Ovary (tissue), 10 donors: ENCODE measurements at regions of chr21 and their contacts with region 1.

Region 1: GRCh38 chr21:45287438-45288391 is at the start of gene POFUT2:
- DNase-seq: peak; percentile 97 to 99 (median 99)
- H3K4me3 ChIP-seq: peak within 1 kb of the TSS; percentile 79
- H3K27ac ChIP-seq: peak within 1 kb of the TSS; percentile 30 to 53
- H3K4me1 ChIP-seq: peaks cover 10% of the 10 kb centered on the region
- H3K27me3 ChIP-seq: no peaks in the 10 kb centered on the region
- CTCF ChIP-seq: no peak
- EP300 ChIP-seq: no peak
- POLR2A ChIP-seq: peak; percentile 82
- total RNA-seq, gene POFUT2: 26.2 to 48.2 (median 40.1) TPM

Region 2: DNA sequence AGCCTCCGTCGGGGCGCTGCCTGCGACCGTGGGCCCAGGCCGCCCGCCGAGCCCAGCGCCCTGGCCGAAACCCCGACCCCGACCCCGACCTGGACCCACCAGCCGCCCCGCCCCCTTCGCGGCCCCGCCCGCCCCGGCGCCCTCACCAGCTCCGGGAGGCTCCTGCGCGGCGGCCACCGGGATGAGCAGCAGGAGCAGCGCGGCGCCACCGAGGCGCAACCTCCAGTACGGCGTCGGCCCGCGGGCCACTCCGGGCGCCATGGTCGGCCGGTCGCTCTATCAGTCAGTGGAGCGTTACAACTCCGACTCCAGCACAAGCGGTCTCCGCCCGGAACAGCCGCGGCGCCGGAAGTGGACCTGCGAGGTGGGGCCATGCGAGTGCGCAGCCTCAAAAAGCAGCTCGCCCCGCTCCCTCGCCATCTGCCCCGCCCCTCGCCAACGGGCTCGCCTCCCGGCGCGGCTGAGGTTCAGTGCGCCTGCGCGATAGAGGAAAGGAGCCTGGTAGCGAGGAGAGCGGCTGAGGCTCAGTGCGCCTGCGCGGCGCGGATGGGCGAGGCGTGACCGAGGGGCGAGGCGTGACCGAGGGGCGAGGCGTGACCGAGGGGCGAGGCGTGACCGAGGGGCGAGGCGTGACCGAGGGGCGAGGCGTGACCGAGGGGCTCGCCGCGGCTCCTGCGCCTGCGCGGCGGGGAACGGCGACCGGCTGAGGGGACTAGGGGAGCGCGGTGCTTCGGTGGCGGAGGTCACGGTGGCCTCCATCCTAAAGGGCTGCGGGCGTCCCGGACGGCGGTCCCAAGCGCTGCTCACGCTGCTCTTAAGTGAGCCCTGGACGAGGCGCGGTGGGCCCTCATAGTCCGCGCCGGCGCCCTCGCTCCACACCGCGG is 414.1 kb before region 1 on chr21 and contains the start of gene PTTG1IP:
- intact Hi-C with region 1: loop called in 1 of 4 experiments (anchors 10 kb)
- DNase-seq: peak; percentile 98 to 99 (median 99)
- H3K4me3 ChIP-seq: peak within 1 kb of the TSS; percentile 60
- H3K27ac ChIP-seq: peak within 1 kb of the TSS; percentile 71 to 85
- H3K4me1 ChIP-seq: peaks cover 16% of the 10 kb centered on the region
- H3K27me3 ChIP-seq: no peaks in the 10 kb centered on the region
- CTCF ChIP-seq: no peak
- EP300 ChIP-seq: no peak
- POLR2A ChIP-seq: peak; percentile 63
- total RNA-seq, gene PTTG1IP: 133 to 226 (median 143) TPM

Region 3: DNA sequence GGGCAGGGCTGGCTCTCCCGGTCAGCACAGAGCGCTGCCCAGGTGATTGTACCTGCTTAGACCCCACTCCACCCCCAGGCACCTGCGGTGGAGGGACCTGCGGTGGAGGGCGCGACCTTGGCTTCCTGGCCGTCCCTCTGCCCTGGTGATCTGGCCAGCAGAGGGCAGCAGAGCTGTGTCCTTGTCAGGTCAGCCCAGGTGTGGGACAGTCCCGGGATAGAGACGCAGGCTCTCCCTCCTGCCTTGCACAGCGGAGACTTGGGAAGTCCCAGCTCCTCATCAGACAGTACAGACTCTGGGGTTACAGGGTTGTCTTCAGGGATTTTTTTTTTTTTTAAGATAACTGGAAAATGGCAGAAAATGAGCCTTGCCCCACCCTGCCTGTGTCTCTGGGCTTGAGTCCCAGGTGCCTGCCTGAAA is 337.9 kb before region 1 on chr21:
- intact Hi-C with region 1: loop called in 1 of 4 experiments (anchors 10 kb)
- DNase-seq: peak; percentile 85 to 92 (median 89)
- H3K4me3 ChIP-seq: no peak overlapping the region
- H3K27ac ChIP-seq: no peak overlapping the region
- H3K4me1 ChIP-seq: no peaks in the 10 kb centered on the region
- H3K27me3 ChIP-seq: no peaks in the 10 kb centered on the region
- CTCF ChIP-seq: peak; percentile 79 to 91 (median 86)
- EP300 ChIP-seq: no peak
- POLR2A ChIP-seq: no peak

Region 4: GRCh38 chr21:45404730-45405270 is 117.1 kb after region 1 on chr21 and contains the start of gene COL18A1:
- intact Hi-C with region 1: loop called in 1 of 4 experiments (anchors 10 kb)
- DNase-seq: peak; percentile 78 to 87 (median 85)
- H3K4me3 ChIP-seq: peak within 1 kb of the TSS; percentile 68
- H3K27ac ChIP-seq: peak within 1 kb of the TSS; percentile 87 to 91
- H3K4me1 ChIP-seq: peaks cover 13% of the 10 kb centered on the region
- H3K27me3 ChIP-seq: no peaks in the 10 kb centered on the region
- CTCF ChIP-seq: no peak
- EP300 ChIP-seq: no peak
- POLR2A ChIP-seq: peak; percentile 35
- total RNA-seq, gene COL18A1: 141 to 353 (median 270) TPM

Region 5: DNA sequence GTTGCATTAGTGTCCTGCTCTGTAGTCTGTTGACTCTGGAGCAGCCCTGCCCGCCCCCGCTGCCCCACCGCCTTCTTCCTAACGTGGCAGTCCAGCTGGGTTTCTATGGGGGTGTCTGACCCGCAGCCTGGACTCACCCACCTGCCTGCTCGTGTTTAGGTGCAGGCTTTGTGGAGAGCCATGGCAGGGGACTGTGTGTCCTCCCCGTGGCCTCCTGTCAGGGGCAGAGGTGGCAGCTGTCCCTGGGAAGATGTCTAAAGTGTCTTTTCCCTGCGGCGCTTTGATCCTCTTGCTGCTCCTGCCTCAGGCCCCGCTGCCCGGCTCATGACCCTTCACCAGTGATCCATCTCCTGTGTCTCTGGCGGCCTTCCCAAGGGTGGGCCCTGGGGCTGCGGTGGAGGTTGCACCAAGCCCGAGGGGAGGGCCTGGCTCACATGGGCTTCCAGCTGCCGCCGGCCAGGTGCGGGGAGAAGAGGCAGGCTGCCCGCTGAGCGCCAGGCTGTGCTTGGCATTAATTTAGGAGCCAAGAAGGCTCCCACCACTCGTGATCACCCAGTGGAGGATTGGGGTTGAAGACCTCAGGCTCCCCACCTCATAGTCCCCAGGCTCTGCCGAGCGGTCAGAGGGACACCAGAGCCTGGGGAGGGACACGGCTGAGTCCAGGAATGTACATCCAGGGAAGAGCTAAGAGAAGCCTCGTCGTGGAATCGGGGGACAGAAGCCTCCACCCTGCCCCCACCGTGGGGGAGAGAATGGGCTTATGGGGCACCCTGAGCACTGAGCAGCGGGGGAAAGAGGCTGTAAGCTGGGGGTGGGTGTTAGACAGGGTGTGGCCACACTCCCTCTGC is 161.3 kb after region 1 on chr21:
- intact Hi-C with region 1: no loop called
- DNase-seq: peak in 2 of 5 donors; percentile 30 to 49
- H3K4me3 ChIP-seq: no peak overlapping the region
- H3K27ac ChIP-seq: no peak overlapping the region
- H3K4me1 ChIP-seq: peaks cover 4% of the 10 kb centered on the region
- H3K27me3 ChIP-seq: no peaks in the 10 kb centered on the region
- CTCF ChIP-seq: no peak
- EP300 ChIP-seq: no peak
- POLR2A ChIP-seq: no peak